ENCODE measurements at regions of chr13 and their contacts with region 1.

Region 1: GRCh38 chr13:26186118-26186870 is 35.8 kb downstream of the RNF6 start:
- DNase-seq: peak; percentile 94 to 96 (median 95)
- H3K4me3 ChIP-seq: peak overlapping the region; percentile 73 to 89 (median 84)
- H3K27ac ChIP-seq: peak overlapping the region; percentile 55 to 88
- H3K4me1 ChIP-seq: peaks cover 0 to 9% (median 4%) of the 10 kb centered on the region in 3 donors
- H3K27me3 ChIP-seq: no peaks in the 10 kb centered on the region
- CTCF ChIP-seq: peak; percentile 48

Region 2: GRCh38 chr13:26095338-26095737 is 91.0 kb before region 1 on chr13:
- intact Hi-C with region 1: no loop called
- DNase-seq: no peak
- H3K4me3 ChIP-seq: no peak overlapping the region
- H3K27ac ChIP-seq: no peak overlapping the region
- H3K4me1 ChIP-seq: no peaks in the 10 kb centered on the region
- H3K27me3 ChIP-seq: no peaks in the 10 kb centered on the region
- CTCF ChIP-seq: no peak

Region 3: DNA sequence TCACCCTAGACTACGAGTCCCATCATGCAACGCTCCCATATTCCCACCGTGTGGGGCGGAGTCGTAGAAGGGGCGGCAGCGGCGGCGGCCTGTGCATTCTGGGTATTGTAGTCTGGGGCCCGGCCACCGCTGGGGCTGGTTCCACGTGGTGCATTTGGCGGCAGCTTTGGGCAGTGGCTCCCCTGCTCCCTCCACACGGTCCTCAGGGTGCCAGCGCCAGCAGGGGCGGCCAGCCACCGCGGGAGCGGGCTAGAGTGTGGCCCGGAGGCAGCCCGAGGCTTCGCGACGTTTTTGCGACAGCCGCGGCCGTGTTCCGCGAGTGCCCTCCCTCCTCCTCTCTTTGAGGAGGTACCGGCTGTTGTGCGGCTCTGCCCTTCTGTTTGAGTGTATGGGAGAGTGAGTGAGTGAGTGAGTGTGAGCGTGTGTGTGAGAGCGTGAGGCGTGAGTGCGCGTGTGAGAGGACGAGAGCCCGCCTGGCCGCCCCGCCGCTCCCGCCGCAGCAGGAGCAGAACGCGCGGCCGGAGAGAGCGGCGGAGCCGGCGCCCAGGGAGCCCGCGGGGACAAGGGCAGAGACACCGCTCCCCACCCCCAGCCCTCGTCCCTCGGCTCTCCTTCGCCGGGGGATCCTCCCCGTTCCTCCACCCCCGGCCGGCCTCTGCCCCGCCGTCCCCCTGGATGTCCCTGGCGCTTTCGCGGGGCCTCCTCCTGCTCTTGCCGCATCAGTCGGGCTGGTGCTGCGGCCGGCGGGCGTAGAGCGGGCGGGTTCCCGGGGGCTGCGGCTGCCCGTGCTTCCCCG is 67.7 kb after region 1 on chr13 and contains the start of gene CDK8:
- intact Hi-C with region 1: no loop called
- DNase-seq: peak; percentile 92 to 97 (median 94)
- H3K4me3 ChIP-seq: peak within 1 kb of the TSS; percentile 72 to 83 (median 80)
- H3K27ac ChIP-seq: peak within 1 kb of the TSS; percentile 96 to 98
- H3K4me1 ChIP-seq: peaks cover 0 to 4% (median 0%) of the 10 kb centered on the region in 3 donors
- H3K27me3 ChIP-seq: no peaks in the 10 kb centered on the region
- CTCF ChIP-seq: no peak
- total RNA-seq, gene CDK8: 10.4 TPM

Region 4: DNA sequence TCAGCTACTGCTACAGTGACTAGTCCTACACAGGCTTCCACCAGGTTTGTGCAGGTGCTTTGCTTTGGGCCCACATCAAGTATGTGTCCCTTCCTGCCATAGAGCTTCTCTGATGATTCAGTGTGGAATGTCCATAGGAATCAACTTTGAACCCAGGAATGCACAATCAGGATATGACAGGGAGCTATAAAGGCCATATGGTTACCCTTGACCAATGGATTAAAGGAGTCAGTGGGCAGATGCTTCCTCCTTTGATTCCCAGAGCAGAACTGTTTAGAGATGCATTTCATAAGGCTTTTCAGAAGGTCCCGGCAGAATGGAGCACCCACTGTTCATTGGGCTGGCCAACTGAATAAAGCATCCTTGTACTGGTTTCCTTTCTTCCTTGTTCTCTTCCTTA is 226.0 kb after region 1 on chr13:
- intact Hi-C with region 1: no loop called
- DNase-seq: no peak
- H3K4me3 ChIP-seq: no peak overlapping the region
- H3K27ac ChIP-seq: no peak overlapping the region
- H3K4me1 ChIP-seq: no peaks in the 10 kb centered on the region
- H3K27me3 ChIP-seq: no peaks in the 10 kb centered on the region
- CTCF ChIP-seq: no peak

Region 5: GRCh38 chr13:26498656-26499591 is 312.6 kb after region 1 on chr13:
- intact Hi-C with region 1: loop called (anchors 10 kb)
- DNase-seq: peak in 2 of 5 donors; percentile 34 to 38
- H3K4me3 ChIP-seq: no peak overlapping the region
- H3K27ac ChIP-seq: no peak overlapping the region
- H3K4me1 ChIP-seq: no peaks in the 10 kb centered on the region
- H3K27me3 ChIP-seq: no peaks in the 10 kb centered on the region
- CTCF ChIP-seq: no peak

Measured in kidney (tissue), 22 donors.